Activated T-helper 2 cell treated with anti-CD3 and anti-CD28 coated beads, Interferon-gamma antibody, Interleukin-2, Interleukin-4, amounts not matched to agents 10 μg/mL and 5 μg/mL and 100 μg/mL, durations not matched to agents 14 hours and 24 hours and 36 hours (primary cell): ENCODE measurements at regions of chr14 and their contacts with region 1.

Region 1: DNA sequence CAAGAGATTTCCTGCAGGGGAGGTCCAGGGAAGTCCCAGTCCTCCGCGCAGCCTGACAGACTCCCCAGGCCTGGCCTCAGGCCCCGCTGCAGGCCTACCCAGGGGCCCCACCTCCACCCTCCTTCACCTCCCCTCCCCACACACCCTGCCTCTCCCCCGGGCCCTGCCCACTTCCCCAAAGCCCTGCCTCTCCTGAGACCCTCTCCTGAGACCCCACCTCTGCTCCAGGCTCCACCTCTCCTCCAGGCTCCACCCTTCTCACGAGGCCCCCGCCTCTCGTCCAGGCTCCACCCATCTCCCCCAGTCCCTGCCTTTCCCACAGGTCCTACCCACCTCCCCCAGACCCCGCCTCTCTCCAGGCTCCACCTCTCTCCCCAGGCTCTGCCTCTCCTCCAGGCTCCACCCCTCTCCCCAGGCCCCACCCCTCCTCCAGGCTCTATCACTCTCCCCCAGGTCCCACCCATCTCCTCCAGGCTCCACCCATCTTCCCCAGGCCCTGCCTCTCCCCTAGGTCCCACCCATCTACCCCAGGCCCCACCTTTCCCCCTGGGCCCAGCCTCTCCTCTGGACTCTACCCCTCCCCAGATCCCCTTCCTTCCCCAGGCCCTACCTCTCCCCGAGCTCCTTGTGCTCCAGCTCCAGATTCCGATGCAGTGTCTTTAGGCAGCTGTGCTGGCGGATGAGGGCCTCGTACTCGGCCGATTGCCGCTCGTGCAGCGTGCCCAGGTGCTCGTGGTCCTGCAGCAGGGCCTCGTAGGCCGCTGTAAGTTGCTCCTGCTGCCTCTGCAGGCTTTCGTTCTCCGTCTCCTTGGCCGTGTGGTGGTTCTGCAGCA is 58.8 kb upstream of the GPR68 start:
- DNase-seq: peak; percentile 56
- H3K4me3 Mint-ChIP-seq: peak overlapping the region; percentile 27
- H3K27ac Mint-ChIP-seq: peak overlapping the region; percentile 97
- H3K4me1 Mint-ChIP-seq: peaks cover 46% of the 10 kb centered on the region
- H3K27me3 Mint-ChIP-seq: no peaks in the 10 kb centered on the region

Region 2: GRCh38 chr14:91317381-91318308 is 14.3 kb after region 1 on chr14:
- intact Hi-C with region 1: loop called (anchors 1 kb)
- DNase-seq: peak; percentile 69
- H3K4me3 Mint-ChIP-seq: peak overlapping the region; percentile 54
- H3K27ac Mint-ChIP-seq: peak overlapping the region; percentile 98
- H3K4me1 Mint-ChIP-seq: peaks cover 55% of the 10 kb centered on the region
- H3K27me3 Mint-ChIP-seq: no peaks in the 10 kb centered on the region